H1 (cell line): ENCODE measurements at regions of chr7 and their contacts with region 1.

Region 1: DNA sequence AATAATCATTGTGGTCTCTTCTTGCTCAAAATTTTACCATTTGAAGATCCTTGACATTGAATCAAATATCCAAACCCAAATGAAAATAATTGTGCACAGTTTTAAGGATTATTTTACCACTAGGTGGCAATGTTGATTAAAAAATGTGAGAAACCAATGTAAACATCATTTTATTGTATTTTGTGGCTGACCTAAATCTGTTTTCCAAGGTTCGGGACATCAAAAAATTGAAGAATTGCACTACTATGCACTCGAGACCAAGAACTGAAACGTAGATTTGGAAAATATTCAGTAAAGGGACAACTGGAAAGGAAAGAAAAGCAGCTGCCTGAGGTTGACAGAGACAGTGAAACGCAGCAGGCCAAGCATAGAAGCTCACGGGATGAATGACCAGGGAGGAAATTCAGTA is 259.3 kb downstream of the SNX13 start:
- DNase-seq: no peak
- H3K4me3 ChIP-seq: no peak overlapping the region
- H3K27ac ChIP-seq: no peak overlapping the region
- H3K4me1 ChIP-seq: peaks cover 0 to 2% (median under 1%) of the 10 kb centered on the region in 4 experiments; a peak in 3 of 7 replicates
- H3K27me3 ChIP-seq: no peaks in the 10 kb centered on the region; a peak in 1 of 7 replicates
- CTCF ChIP-seq: peak in 1 of 3 experiments; percentile 13; a peak in 2 of 4 replicates
- EP300 ChIP-seq: no peak
- POLR2A ChIP-seq: no peak
- RAD21 ChIP-seq: peak in 1 of 2 experiments; percentile 54

Region 2: DNA sequence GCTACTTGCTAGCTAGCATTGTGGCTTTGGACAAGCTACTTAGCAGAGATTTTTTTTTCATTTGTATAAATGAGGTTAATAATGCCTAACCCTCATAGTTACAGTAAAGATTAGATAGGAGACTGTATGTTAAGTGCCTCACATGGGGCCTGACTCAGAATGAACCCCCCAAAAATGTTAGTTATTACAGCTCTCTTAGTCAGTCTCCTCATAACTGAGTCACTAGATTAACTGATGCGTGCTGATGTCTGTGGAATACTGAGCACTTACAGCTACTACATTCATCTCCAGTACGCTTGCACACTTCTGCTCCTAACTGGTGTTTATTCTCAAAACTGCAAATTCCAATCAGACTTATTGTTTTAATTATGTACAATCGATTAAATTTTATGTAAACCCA is 55.9 kb before region 1 on chr7:
- CTCF ChIA-PET with region 1: no interaction called
- POLR2A ChIA-PET with region 1: no interaction called
- DNase-seq: no peak
- H3K4me3 ChIP-seq: no peak overlapping the region
- H3K27ac ChIP-seq: no peak overlapping the region
- H3K4me1 ChIP-seq: 0 out of 7 replicates have a peak, but pooled peaks cover 0 to 3% (median 0%) of the 10 kb centered on the region in 4 experiments
- H3K27me3 ChIP-seq: no peaks in the 10 kb centered on the region
- CTCF ChIP-seq: no peak
- EP300 ChIP-seq: no peak
- POLR2A ChIP-seq: no peak
- RAD21 ChIP-seq: no peak

Region 3: DNA sequence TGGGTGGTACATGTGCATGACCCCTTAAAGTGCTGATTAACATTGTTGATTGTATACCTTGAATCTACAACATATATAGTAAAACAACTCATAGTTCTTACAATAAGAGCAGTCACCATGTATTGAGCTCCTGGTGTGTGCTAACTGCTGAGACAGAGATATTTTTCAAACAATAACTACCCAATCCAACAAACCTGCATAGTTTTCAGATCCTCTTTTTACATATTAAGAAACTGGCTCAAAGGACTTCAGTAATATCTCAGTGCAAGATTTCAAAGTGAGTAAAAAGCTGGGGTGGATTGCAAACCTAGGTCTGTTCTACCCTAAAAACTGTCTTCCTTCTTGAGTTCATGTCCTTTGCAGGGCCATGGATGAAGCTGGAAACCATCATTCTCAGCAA is 12.8 kb before region 1 on chr7:
- CTCF ChIA-PET with region 1: interaction called, 23 read pairs
- POLR2A ChIA-PET with region 1: no interaction called
- DNase-seq: no peak
- H3K4me3 ChIP-seq: no peak overlapping the region
- H3K27ac ChIP-seq: no peak overlapping the region
- H3K4me1 ChIP-seq: no peaks in the 10 kb centered on the region
- H3K27me3 ChIP-seq: no peaks in the 10 kb centered on the region
- CTCF ChIP-seq: no peak
- EP300 ChIP-seq: no peak
- POLR2A ChIP-seq: no peak
- RAD21 ChIP-seq: no peak

Region 4: DNA sequence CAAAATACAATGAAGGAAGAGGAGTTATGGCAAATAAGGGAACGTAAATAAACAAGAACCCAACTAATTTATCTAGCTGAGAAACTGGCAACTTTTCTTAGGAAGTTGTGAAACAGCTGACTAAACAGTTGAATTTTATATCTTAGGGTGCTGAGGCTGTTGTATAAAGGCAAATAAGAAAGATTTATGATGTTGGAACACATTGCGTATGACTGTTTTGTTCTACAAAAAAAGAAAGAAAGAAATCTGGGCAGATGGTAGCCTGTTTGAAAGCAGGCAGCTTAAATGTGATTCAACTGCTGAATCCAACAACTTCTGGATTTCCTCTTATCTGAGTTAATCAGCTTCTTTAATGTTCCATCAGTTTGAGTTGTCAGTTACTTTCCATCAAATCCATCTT is 44.8 kb after region 1 on chr7:
- CTCF ChIA-PET with region 1: interaction called, 11 read pairs
- POLR2A ChIA-PET with region 1: no interaction called
- DNase-seq: no peak
- H3K4me3 ChIP-seq: no peak overlapping the region
- H3K27ac ChIP-seq: no peak overlapping the region
- H3K4me1 ChIP-seq: no peaks in the 10 kb centered on the region; a peak in 1 of 7 replicates
- H3K27me3 ChIP-seq: no peaks in the 10 kb centered on the region
- CTCF ChIP-seq: no peak
- EP300 ChIP-seq: no peak
- POLR2A ChIP-seq: no peak
- RAD21 ChIP-seq: no peak

Region 5: GRCh38 chr7:18103436-18104218 is 422.7 kb after region 1 on chr7:
- CTCF ChIA-PET with region 1: no interaction called
- POLR2A ChIA-PET with region 1: no interaction called
- DNase-seq: no peak
- H3K4me3 ChIP-seq: no peak overlapping the region
- H3K27ac ChIP-seq: no peak overlapping the region
- H3K4me1 ChIP-seq: no peaks in the 10 kb centered on the region
- H3K27me3 ChIP-seq: no peaks in the 10 kb centered on the region
- CTCF ChIP-seq: no peak
- EP300 ChIP-seq: no peak
- POLR2A ChIP-seq: no peak
- RAD21 ChIP-seq: no peak